ENCODE measurements at regions of chr11 and their contacts with region 1.

Region 1: DNA sequence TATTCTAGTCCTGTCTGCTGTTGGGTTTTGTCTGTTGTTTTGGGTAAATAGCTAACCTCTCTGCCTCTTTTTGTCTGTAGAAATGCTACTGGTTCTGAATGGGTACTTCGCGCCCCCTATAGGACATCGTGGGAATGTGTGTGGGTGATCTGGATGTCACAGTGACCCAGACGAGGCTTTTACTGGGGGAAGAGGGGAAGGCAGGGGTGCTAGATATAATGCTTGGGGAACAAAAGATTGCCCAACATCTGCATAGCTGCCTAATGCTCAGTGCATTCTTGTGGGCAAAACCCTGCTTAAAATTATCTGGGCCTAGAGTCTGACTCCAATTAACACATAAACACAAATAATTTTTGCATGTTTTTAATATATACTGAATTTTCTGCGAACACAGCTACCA is 57.7 kb downstream of the BMAL1 start:
- DNase-seq: no peak
- ATAC-seq: peak; percentile 82
- H3K4me3 Mint-ChIP-seq: no peak overlapping the region
- H3K27ac Mint-ChIP-seq: no peak overlapping the region
- H3K4me1 Mint-ChIP-seq: peaks cover 48% of the 10 kb centered on the region
- H3K27me3 Mint-ChIP-seq: no peaks in the 10 kb centered on the region
- CTCF ChIP-seq: no peak

Region 2: GRCh38 chr11:11826260-11826659 is 1509.1 kb before region 1 on chr11:
- CTCF ChIA-PET with region 1: no interaction called
- POLR2A ChIA-PET with region 1: no interaction called
- intact Hi-C with region 1: no loop called
- DNase-seq: no peak
- ATAC-seq: no peak
- H3K4me3 Mint-ChIP-seq: no peak overlapping the region
- H3K27ac Mint-ChIP-seq: no peak overlapping the region
- H3K4me1 Mint-ChIP-seq: no peaks in the 10 kb centered on the region
- H3K27me3 Mint-ChIP-seq: peaks cover 2% of the 10 kb centered on the region
- CTCF ChIP-seq: no peak

Region 3: GRCh38 chr11:12411806-12412727 is 923.3 kb before region 1 on chr11:
- CTCF ChIA-PET with region 1: no interaction called
- POLR2A ChIA-PET with region 1: no interaction called
- intact Hi-C with region 1: loop called (anchors 5 kb)
- DNase-seq: no peak
- ATAC-seq: no peak
- H3K4me3 Mint-ChIP-seq: no peak overlapping the region
- H3K27ac Mint-ChIP-seq: no peak overlapping the region
- H3K4me1 Mint-ChIP-seq: no peaks in the 10 kb centered on the region
- H3K27me3 Mint-ChIP-seq: peaks cover 13% of the 10 kb centered on the region
- CTCF ChIP-seq: no peak

Region 4: DNA sequence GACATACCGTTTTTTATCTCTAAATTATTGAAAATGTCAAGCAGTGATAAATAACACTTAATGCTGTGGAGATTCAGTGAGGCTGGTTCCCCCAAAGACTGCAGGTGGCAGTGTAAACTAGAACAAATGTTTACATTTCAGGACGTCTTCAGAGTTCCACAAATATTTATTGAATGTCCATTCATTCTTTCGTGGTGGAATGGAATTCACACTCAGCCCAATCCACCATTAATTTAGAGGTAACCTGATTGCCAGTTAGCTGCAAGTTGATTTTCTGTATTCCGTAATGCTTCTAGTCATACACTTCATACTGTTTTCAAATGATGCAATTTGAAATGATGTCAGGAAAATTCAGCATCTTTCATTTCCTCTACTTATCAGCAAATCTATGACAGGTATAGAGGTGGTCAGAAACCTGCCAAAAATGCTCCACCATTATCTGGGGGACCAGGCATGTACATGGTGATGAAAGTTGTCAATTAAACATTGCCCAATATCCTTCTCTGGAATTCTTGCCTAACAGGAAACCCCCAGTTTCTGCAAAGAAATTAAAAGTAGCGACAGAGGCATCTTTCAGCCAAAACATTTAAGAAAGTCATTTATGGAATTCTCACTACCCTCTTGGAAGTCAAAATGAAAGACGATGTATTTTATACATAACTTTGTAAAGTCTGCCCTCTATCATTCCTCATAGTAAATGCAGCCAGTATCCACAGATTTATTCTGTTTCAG is 152.1 kb before region 1 on chr11:
- CTCF ChIA-PET with region 1: interaction called, 9 read pairs
- POLR2A ChIA-PET with region 1: no interaction called
- intact Hi-C with region 1: loop called (anchors 2 kb)
- DNase-seq: no peak
- ATAC-seq: no peak
- H3K4me3 Mint-ChIP-seq: no peak overlapping the region
- H3K27ac Mint-ChIP-seq: no peak overlapping the region
- H3K4me1 Mint-ChIP-seq: no peaks in the 10 kb centered on the region
- H3K27me3 Mint-ChIP-seq: peaks cover 4% of the 10 kb centered on the region
- CTCF ChIP-seq: no peak

Region 5: GRCh38 chr11:13210424-13210823 is 124.9 kb before region 1 on chr11:
- CTCF ChIA-PET with region 1: interaction called, 15 read pairs
- POLR2A ChIA-PET with region 1: no interaction called
- intact Hi-C with region 1: loop called (anchors 1 kb)
- DNase-seq: no peak
- ATAC-seq: no peak
- H3K4me3 Mint-ChIP-seq: no peak overlapping the region
- H3K27ac Mint-ChIP-seq: no peak overlapping the region
- H3K4me1 Mint-ChIP-seq: peaks cover 12% of the 10 kb centered on the region
- H3K27me3 Mint-ChIP-seq: peaks cover 20% of the 10 kb centered on the region
- CTCF ChIP-seq: no peak

Region 6: GRCh38 chr11:13238879-13239514 is 96.3 kb before region 1 on chr11:
- CTCF ChIA-PET with region 1: no interaction called
- POLR2A ChIA-PET with region 1: no interaction called
- intact Hi-C with region 1: loop called (anchors 1 kb)
- DNase-seq: no peak
- ATAC-seq: peak; percentile 47
- H3K4me3 Mint-ChIP-seq: no peak overlapping the region
- H3K27ac Mint-ChIP-seq: no peak overlapping the region
- H3K4me1 Mint-ChIP-seq: no peaks in the 10 kb centered on the region
- H3K27me3 Mint-ChIP-seq: peaks cover 5% of the 10 kb centered on the region
- CTCF ChIP-seq: no peak

Region 7: GRCh38 chr11:13405220-13405619 is 69.9 kb after region 1 on chr11:
- CTCF ChIA-PET with region 1: no interaction called
- POLR2A ChIA-PET with region 1: no interaction called
- intact Hi-C with region 1: no loop called
- DNase-seq: no peak
- ATAC-seq: no peak
- H3K4me3 Mint-ChIP-seq: no peak overlapping the region
- H3K27ac Mint-ChIP-seq: no peak overlapping the region
- H3K4me1 Mint-ChIP-seq: no peaks in the 10 kb centered on the region
- H3K27me3 Mint-ChIP-seq: no peaks in the 10 kb centered on the region
- CTCF ChIP-seq: no peak

Region 8: GRCh38 chr11:13897646-13898276 is 562.4 kb after region 1 on chr11:
- CTCF ChIA-PET with region 1: no interaction called
- POLR2A ChIA-PET with region 1: no interaction called
- intact Hi-C with region 1: no loop called
- DNase-seq: no peak
- ATAC-seq: no peak
- H3K4me3 Mint-ChIP-seq: no peak overlapping the region
- H3K27ac Mint-ChIP-seq: no peak overlapping the region
- H3K4me1 Mint-ChIP-seq: peaks cover 15% of the 10 kb centered on the region
- H3K27me3 Mint-ChIP-seq: peaks cover 17% of the 10 kb centered on the region
- CTCF ChIP-seq: no peak

Measured in activated B cell treated with CpG ODN at 0.5 μM for 24 hours (primary cell).